CD14-positive monocyte (primary cell): ENCODE measurements at regions of chr1 and their contacts with region 1.

Region 1: GRCh38 chr1:205919026-205919746 is 24.1 kb downstream of the SLC26A9 start:
- DNase-seq: peak; percentile 66 to 70 (median 66)
- H3K4me3 ChIP-seq: no peak overlapping the region
- H3K4me3 Mint-ChIP-seq: no peak overlapping the region
- H3K27ac ChIP-seq: no peak overlapping the region
- H3K27ac Mint-ChIP-seq: peak overlapping the region in 2 of 7 donors; percentile 24 to 75
- H3K4me1 ChIP-seq: peaks cover 5 to 26% of the 10 kb centered on the region in 2 donors
- H3K4me1 Mint-ChIP-seq: peaks cover 19% of the 10 kb centered on the region
- H3K27me3 ChIP-seq: no peaks in the 10 kb centered on the region
- H3K27me3 Mint-ChIP-seq: peaks cover 3 to 14% (median 8%) of the 10 kb centered on the region in 3 donors
- CTCF ChIP-seq: peak; percentile 89

Region 2: DNA sequence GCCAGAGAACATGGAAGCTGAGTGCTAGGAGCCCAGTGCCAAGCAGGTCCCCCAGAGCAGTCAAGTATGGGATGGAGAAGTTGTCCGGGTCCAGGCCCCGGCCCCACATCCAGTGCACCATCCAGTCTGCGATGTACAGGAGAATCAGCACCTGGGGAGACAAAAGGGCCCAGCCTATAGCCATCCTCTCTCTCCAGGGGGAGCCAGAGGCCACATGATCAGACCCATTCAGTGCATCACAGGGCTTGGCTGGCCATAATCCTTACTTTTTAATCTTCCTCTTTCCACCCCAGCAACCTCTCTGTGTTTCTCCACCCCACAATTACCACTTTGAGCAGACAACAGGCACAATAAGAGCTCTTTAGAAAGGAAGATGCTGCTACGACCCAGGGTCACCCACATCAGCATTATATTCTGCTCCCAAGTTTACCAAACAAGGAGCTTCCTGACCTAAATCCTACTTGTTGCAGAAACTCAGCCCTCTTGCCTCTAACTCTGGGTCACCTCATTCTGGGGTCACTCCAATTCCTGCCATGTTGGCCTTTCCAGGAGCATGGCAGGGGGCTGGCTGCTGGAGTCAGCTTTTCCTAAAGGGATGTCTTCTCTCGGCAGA is 127.5 kb before region 1 on chr1:
- intact Hi-C with region 1: loop called in 1 of 2 experiments (anchors 5 kb)
- DNase-seq: peak; percentile 51 to 65 (median 63)
- H3K4me3 ChIP-seq: no peak overlapping the region
- H3K4me3 Mint-ChIP-seq: no peak overlapping the region
- H3K27ac ChIP-seq: no peak overlapping the region
- H3K27ac Mint-ChIP-seq: peak overlapping the region in 1 of 7 donors; percentile 39
- H3K4me1 ChIP-seq: peaks cover 19% of the 10 kb centered on the region in 2 donors
- H3K4me1 Mint-ChIP-seq: peaks cover 27% of the 10 kb centered on the region
- H3K27me3 ChIP-seq: no peaks in the 10 kb centered on the region
- H3K27me3 Mint-ChIP-seq: no peaks in the 10 kb centered on the region
- CTCF ChIP-seq: peak; percentile 80

Region 3: GRCh38 chr1:205858141-205858961 is 60.8 kb before region 1 on chr1:
- intact Hi-C with region 1: no loop called
- DNase-seq: no peak
- H3K4me3 ChIP-seq: no peak overlapping the region
- H3K4me3 Mint-ChIP-seq: peak overlapping the region in 1 of 2 donors; percentile 5
- H3K27ac ChIP-seq: no peak overlapping the region
- H3K27ac Mint-ChIP-seq: no peak overlapping the region
- H3K4me1 ChIP-seq: no peaks in the 10 kb centered on the region
- H3K4me1 Mint-ChIP-seq: peaks cover 6% of the 10 kb centered on the region
- H3K27me3 ChIP-seq: no peaks in the 10 kb centered on the region
- H3K27me3 Mint-ChIP-seq: peaks cover 0 to 5% (median 0%) of the 10 kb centered on the region in 3 donors
- CTCF ChIP-seq: no peak

Region 4: DNA sequence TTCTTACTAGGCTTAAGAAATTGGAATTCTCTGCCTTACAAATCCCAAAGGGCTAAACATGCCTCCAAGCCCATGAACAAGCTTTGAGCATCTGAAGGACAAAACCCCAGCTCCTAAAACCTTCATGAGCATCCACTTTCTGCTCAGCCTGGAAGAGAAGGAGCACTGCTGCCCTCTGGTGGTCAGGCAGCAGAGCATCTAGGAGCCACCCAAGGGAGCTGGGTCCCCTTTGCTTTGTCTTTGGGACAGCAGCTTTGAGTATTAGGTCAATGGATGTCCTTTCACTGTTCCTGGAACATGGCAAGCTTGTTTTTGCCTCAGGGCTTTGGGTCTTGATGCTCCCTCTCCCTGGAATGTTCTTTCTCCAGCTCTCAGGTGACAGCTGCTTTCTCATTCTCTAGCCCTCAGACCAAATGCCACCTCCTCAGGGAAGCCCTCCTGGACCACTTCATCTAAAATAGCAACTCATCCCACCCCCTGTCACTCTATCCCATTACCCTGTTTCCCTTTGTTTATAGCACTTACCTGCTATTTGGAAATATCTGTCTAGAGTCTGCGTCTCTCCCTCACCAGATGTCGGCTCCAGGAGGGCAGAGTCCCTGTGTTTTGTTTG is 58.3 kb after region 1 on chr1:
- intact Hi-C with region 1: loop called (anchors 1 kb)
- DNase-seq: peak; percentile 70 to 78 (median 76)
- H3K4me3 ChIP-seq: no peak overlapping the region
- H3K4me3 Mint-ChIP-seq: no peak overlapping the region
- H3K27ac ChIP-seq: no peak overlapping the region
- H3K27ac Mint-ChIP-seq: no peak overlapping the region
- H3K4me1 ChIP-seq: peaks cover 0 to 12% of the 10 kb centered on the region in 2 donors
- H3K4me1 Mint-ChIP-seq: peaks cover 7% of the 10 kb centered on the region
- H3K27me3 ChIP-seq: no peaks in the 10 kb centered on the region
- H3K27me3 Mint-ChIP-seq: peaks cover 1 to 3% (median 2%) of the 10 kb centered on the region in 3 donors
- CTCF ChIP-seq: peak; percentile 94

Region 5: DNA sequence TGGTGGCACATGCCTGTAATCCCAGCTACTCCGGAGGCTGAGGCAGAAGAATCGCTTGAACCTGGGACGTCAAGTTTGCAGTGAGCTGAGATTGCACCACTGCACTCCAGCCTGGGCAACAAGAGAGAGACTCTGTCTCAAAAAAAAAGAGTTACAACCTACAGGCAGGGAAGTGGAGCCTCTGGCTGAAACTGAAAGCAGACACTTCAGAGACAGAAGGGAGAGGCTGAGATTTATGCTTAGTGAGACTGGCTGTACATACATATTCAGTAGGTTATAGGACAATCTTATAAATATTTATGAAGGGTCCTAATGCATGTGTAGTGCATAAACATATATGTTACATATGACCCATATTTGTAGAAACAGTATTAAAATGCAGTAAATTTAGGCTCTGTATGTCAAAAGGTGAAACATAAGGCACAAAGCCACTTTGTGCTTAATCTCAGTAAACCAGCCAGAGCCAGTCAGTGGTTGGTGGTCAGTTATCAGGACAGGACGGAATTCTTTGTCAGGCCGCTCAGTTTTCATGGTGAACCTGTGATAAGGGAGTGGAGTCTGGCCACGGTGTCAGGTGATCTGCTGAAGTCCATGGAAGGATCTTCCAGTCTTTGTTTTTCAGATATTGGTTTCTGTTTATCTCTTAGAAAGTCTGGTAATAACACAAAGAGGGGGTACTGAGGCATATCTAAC is 147.4 kb after region 1 on chr1:
- intact Hi-C with region 1: no loop called
- DNase-seq: peak; percentile 36 to 67 (median 40)
- H3K4me3 ChIP-seq: no peak overlapping the region
- H3K4me3 Mint-ChIP-seq: no peak overlapping the region
- H3K27ac ChIP-seq: peak overlapping the region; percentile 15 to 21
- H3K27ac Mint-ChIP-seq: peak overlapping the region in 6 of 7 donors; percentile 33 to 87 (median 72)
- H3K4me1 ChIP-seq: peaks cover 29 to 37% of the 10 kb centered on the region in 2 donors
- H3K4me1 Mint-ChIP-seq: peaks cover 39% of the 10 kb centered on the region
- H3K27me3 ChIP-seq: no peaks in the 10 kb centered on the region
- H3K27me3 Mint-ChIP-seq: peaks cover 0 to 2% (median 0%) of the 10 kb centered on the region in 3 donors
- CTCF ChIP-seq: no peak

Region 6: DNA sequence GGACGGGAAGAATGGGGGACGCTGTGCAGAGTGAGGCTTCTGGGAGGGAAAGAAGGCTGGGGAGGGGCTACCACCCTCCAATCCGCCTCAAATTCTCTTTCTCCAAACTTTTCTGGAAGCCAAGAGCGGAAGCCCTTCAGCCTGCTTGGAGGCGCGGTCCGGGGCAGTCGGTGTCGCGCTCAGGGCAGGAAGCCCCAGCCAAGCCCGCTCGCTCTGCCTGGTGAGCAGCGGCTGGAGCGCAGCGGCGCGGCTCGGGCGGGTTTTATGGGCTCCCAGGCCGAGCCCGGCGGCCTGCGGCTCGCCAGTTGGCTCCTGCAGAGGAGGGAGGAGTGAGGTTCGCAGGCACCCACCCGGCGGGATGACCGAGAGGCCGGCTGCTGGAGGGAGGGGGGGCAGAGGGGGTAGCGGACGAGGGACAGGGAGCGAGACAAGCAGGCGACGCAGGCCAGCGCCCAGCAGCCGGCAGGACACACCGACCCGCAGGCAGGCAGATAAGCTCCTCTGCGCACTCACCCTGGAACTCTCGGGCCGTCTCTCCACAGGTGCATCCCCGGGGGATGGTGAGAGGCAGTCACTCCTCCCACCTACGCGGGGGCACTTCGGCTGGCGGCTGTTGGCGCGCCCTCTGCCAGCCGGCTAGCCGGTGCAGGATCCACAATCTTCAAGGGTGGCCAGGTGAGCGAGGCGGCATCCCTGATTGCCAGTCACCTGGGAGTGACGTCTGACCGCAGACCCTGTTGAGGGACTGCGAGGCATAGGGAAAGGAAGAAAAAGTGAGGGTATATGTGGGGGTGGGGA is 198.2 kb after region 1 on chr1 and contains the start of gene AVPR1B:
- intact Hi-C with region 1: loop called in 1 of 2 experiments (anchors 10 kb)
- DNase-seq: no peak
- H3K4me3 ChIP-seq: peak within 1 kb of the TSS; percentile 0 to 69 (median 29)
- H3K4me3 Mint-ChIP-seq: peak within 1 kb of the TSS; percentile 65 to 91
- H3K27ac ChIP-seq: no peak within 1 kb of the TSS
- H3K27ac Mint-ChIP-seq: peak within 1 kb of the TSS in 2 of 7 donors; percentile 37 to 53
- H3K4me1 ChIP-seq: peaks cover 12% of the 10 kb centered on the region in 2 donors
- H3K4me1 Mint-ChIP-seq: peaks cover 18% of the 10 kb centered on the region
- H3K27me3 ChIP-seq: peaks cover 12 to 35% of the 10 kb centered on the region in 2 donors
- H3K27me3 Mint-ChIP-seq: peaks cover 34 to 50% (median 46%) of the 10 kb centered on the region in 3 donors
- CTCF ChIP-seq: no peak
- polyA plus RNA-seq, gene AVPR1B: not detected